IMR-90 (cell line): ENCODE measurements at regions of chr3 and their contacts with region 1.

Region 1: DNA sequence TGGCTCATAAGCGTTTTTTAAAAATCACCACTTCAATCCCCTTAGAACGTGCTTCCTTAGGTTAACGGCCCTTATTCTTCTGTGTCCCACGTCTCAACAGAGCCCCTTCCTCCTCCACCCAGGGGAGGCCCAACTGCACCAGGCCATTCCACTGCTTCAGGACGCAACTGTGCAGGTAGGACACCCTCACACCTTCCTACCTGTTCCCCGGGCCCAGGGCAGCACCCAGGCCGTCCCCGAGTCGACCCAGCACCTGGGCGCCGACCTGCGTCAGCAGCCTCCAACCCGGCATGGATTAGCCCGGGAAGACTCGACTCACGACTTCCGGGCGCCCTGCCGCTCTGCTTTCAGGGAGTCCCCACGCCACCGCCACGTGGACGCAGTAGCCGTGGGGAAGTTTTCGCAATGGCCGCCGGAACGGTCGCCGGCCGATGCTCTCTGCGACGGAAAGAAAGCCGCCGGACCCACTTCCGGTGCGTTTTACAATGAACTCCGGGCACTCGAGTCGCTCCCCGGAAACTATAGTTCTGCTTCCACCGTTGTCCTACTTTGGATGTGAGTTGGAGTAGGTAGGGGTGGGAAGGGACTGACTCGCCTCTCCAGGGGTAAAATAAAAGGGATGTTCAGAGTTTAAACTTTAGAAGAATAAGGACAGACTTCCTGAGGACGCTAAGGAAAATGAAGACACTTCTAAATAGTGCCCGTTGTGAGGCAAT is at the start of gene MRPL3:
- DNase-seq: peak; percentile 87
- ATAC-seq: peak; percentile 96
- H3K4me3 ChIP-seq: peak within 1 kb of the TSS; percentile 96
- H3K27ac ChIP-seq: peak within 1 kb of the TSS; percentile 85
- H3K4me1 ChIP-seq: 0 out of 2 replicates have a peak, but pooled peaks cover 3% of the 10 kb centered on the region
- H3K27me3 ChIP-seq: no peaks in the 10 kb centered on the region
- CTCF ChIP-seq: no peak
- POLR2A ChIP-seq: peak; percentile 75; the same call in 1 of the 2 replicates
- RAD21 ChIP-seq: 0 out of 2 replicates have a peak, but pooled peaks have one; percentile 2
- total RNA-seq, gene MRPL3: 186 and 206 TPM in 2 replicates

Region 2: GRCh38 chr3:131026321-131027178 is 476.1 kb before region 1 on chr3 and contains the starts of genes ASTE1 and NEK11:
- CTCF ChIA-PET with region 1: no interaction called
- POLR2A ChIA-PET with region 1: no interaction called
- dilution Hi-C with region 1: no loop called
- in situ Hi-C with region 1: loop called (anchors 25 kb)
- intact Hi-C with region 1: loop called (anchors 5 kb)
- DNase-seq: peak; percentile 73
- ATAC-seq: peak; percentile 99
- H3K4me3 ChIP-seq: peak within 1 kb of the TSS; percentile 96
- H3K27ac ChIP-seq: peak within 1 kb of the TSS; percentile 96
- H3K4me1 ChIP-seq: peaks cover 2% of the 10 kb centered on the region; the same call in 1 of the 2 replicates
- H3K27me3 ChIP-seq: no peaks in the 10 kb centered on the region
- CTCF ChIP-seq: no peak
- POLR2A ChIP-seq: peak; percentile 70
- RAD21 ChIP-seq: no peak
- total RNA-seq, gene ASTE1: 7.5 and 8.1 TPM in 2 replicates
- total RNA-seq, gene NEK11: 1.6 and 1.9 TPM in 2 replicates

Region 3: DNA sequence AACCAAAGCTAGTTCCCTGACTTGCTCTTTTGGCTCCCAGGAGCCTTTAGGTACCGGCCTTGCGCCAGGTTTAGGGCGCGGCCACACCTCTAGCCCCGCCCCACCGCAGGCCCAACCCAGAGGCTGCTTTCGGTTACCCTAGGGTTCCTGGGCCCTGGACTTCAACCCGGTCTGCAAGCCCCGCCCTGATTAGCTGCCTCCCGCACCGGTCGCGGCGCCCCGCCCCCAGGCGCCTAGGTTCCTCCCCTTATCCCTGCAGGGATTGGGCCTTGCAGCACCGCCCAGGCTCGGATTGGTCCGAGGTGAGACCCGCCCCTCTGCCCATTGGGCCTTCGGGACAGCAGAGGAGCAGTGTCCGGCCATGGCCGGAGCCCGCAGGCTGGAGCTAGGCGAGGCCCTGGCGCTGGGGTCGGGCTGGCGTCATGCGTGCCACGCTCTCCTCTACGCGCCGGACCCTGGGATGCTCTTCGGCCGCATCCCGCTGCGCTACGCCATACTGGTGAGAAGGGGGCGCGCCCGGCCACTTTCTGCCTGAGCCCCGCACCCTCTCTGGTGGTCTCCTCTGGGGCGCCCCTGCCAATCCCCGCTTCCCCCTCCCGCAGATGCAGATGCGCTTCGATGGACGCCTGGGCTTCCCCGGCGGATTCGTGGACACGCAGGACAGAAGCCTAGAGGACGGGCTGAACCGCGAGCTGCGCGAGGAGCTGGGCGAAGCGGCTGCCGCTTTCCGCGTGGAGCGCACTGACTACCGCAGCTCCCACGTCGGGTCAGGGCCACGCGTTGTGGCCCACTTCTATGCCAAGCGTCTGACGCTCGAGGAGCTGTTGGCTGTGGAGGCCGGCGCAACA is 121.0 kb before region 1 on chr3 and contains the start of gene NUDT16:
- CTCF ChIA-PET with region 1: no interaction called
- POLR2A ChIA-PET with region 1: no interaction called
- dilution Hi-C with region 1: no loop called
- in situ Hi-C with region 1: no loop called
- intact Hi-C with region 1: loop called (anchors 5 kb)
- DNase-seq: peak; percentile 98
- ATAC-seq: peak; percentile 99
- H3K4me3 ChIP-seq: peak within 1 kb of the TSS; percentile 87
- H3K27ac ChIP-seq: peak within 1 kb of the TSS; percentile 68
- H3K4me1 ChIP-seq: 0 out of 2 replicates have a peak, but pooled peaks cover 2% of the 10 kb centered on the region
- H3K27me3 ChIP-seq: no peaks in the 10 kb centered on the region
- CTCF ChIP-seq: no peak
- POLR2A ChIP-seq: peak; percentile 79
- RAD21 ChIP-seq: no peak
- total RNA-seq, gene NUDT16: 7.8 and 10.4 TPM in 2 replicates

Region 4: DNA sequence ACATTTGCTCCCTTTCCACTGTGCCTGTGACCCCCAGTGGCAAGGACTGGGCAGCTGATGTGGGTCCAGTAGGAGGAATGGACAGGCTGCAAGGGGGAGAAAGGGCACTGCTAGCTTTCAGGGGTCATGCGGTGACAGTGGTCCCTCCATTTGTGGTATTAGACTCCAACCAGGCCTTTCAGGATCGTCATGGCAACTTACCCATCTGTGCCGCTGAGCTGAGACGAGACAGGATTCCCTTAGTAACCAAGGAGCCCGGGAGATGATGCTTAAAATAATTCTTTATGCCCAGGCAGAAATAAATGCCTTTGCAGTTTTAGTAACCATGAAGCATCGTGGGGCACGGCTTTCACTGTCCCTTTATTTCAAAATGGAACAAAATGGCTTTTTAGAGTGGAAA is 16.0 kb after region 1 on chr3:
- CTCF ChIA-PET with region 1: no interaction called
- POLR2A ChIA-PET with region 1: no interaction called
- dilution Hi-C with region 1: no loop called
- in situ Hi-C with region 1: no loop called
- intact Hi-C with region 1: no loop called
- DNase-seq: no peak
- ATAC-seq: no peak
- H3K4me3 ChIP-seq: no peak overlapping the region
- H3K27ac ChIP-seq: no peak overlapping the region
- H3K4me1 ChIP-seq: no peaks in the 10 kb centered on the region
- H3K27me3 ChIP-seq: no peaks in the 10 kb centered on the region
- CTCF ChIP-seq: no peak
- POLR2A ChIP-seq: no peak
- RAD21 ChIP-seq: no peak

Region 5: DNA sequence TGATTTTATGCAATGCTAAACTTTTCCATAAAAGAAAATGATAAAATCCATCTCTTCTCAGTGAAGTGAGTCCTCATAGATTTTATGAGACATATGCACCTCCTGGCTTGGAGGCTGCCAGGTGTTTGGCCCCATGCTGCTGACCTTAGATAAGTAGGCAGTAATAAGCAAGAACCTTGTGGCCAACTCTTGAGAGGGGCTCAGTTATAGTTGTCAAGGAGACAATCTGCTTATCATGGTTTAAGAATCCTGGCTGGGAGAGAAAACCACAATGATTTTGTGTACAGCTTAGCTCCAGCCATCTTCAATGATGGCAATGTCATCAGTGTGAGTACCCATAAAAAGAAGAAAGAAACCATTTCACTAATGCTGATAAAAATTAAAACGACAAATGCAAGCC is 280.1 kb after region 1 on chr3:
- CTCF ChIA-PET with region 1: no interaction called
- POLR2A ChIA-PET with region 1: no interaction called
- dilution Hi-C with region 1: no loop called
- in situ Hi-C with region 1: no loop called
- intact Hi-C with region 1: no loop called
- DNase-seq: no peak
- ATAC-seq: no peak
- H3K4me3 ChIP-seq: no peak overlapping the region
- H3K27ac ChIP-seq: no peak overlapping the region
- H3K4me1 ChIP-seq: no peaks in the 10 kb centered on the region
- H3K27me3 ChIP-seq: no peaks in the 10 kb centered on the region
- CTCF ChIP-seq: no peak
- POLR2A ChIP-seq: no peak
- RAD21 ChIP-seq: no peak